Naive thymus-derived CD4-positive, alpha-beta T cell (primary cell): ENCODE measurements at regions of chr1 and their contacts with region 1.

Region 1: DNA sequence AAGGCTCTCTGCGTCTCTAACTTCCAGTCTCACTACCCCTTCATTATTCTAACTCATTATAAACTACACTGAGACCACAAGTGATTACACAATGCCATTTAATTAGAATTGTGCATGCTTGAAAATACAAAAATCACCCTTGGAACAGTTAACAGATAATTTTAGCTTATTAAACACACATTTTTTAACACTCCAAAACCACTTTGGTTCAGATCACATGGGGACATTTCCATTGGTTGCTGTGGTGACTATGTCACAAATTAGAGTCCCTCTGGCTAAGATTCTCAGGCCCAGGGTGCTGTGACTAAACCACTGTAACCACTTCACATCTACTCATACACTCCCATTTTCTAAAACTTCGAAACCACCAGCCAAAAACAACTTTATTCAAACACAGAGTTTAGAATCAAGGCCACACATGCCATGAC is 43.0 kb downstream of the JAK1 start:
- DNase-seq: no peak
- ATAC-seq: peak; percentile 70
- H3K4me3 ChIP-seq: no peak overlapping the region
- H3K4me3 Mint-ChIP-seq: peak overlapping the region; percentile 35 to 74 (median 62)
- H3K27ac ChIP-seq: peak overlapping the region; percentile 9
- H3K27ac Mint-ChIP-seq: peak overlapping the region; percentile 16 to 86 (median 69)
- H3K4me1 ChIP-seq: peaks cover 74 to 75% of the 10 kb centered on the region in 2 donors
- H3K4me1 Mint-ChIP-seq: peaks cover 79 to 100% (median 96%) of the 10 kb centered on the region in 7 donors
- H3K27me3 ChIP-seq: no peaks in the 10 kb centered on the region
- H3K27me3 Mint-ChIP-seq: no peaks in the 10 kb centered on the region

Region 2: DNA sequence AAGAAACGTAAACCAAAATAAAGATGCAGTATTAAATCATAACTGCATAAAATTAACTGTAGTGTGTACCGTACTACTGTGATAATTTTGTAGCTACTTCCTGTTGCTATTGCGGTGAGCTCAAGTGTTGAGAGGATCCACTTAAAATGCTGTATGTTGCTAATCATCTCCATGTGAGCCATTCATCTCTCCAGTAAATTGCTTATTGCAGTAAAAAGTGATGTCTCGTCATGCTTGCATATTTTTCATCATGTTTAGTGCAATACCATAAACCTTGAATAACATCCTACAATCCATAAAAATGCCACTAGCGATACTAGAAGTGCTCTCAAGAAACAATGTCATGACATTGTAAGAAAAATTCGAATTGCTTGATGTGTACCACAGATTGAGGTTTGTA is 112.2 kb before region 1 on chr1:
- CTCF ChIA-PET with region 1: no interaction called
- POLR2A ChIA-PET with region 1: no interaction called
- intact Hi-C with region 1: no loop called
- DNase-seq: no peak
- ATAC-seq: no peak
- H3K4me3 ChIP-seq: no peak overlapping the region
- H3K4me3 Mint-ChIP-seq: no peak overlapping the region
- H3K27ac ChIP-seq: no peak overlapping the region
- H3K27ac Mint-ChIP-seq: no peak overlapping the region
- H3K4me1 ChIP-seq: no peaks in the 10 kb centered on the region
- H3K4me1 Mint-ChIP-seq: no peaks in the 10 kb centered on the region
- H3K27me3 ChIP-seq: no peaks in the 10 kb centered on the region
- H3K27me3 Mint-ChIP-seq: peaks cover 0 to 2% (median 0%) of the 10 kb centered on the region in 5 donors

Region 3: DNA sequence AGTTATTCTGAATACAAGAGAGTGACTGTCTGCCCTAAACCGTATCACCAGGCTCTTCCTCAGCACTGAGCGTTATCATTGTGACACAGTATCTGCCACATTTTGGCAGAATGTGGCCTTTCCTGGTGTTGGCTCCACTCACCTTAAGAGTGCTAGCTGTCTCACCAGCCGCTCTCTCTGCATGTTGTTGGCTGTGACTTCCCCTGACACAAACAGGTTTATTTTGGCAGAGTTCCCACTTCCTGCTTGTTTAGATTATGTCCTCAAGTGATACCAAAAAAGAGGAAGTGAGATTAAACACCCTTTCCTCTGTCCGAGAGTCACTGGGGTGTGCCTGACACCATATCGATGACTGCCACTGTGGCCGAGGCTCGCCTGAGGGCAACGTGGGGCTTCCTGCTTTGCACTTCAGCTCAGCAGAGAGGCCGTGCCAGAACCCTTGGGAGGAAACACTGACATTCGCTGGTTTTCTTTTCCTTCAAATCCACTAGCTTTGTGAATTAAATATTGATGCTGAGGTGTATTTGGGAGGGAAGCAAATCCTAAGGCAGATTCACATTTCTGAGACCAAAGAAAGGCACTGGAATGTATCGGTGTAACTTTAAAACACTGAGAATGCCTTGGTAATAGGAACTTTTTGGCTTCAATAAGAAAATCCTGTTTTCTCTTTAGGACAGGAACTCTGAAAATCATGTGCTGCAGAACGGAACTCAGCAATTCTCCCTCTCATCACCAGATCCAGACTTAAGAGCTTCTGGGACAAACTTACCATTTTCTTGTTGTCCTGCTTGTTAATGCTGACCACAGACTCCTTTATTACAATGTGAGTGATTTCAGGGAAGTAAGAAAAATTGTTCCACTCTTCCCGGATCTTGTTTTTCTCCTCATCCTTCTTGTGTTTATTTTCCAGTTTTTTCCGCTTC is 59.0 kb before region 1 on chr1:
- CTCF ChIA-PET with region 1: no interaction called
- POLR2A ChIA-PET with region 1: no interaction called
- intact Hi-C with region 1: loop called in 1 of 2 experiments (anchors 5 kb)
- DNase-seq: peak in 8 of 9 donors; percentile 19 to 67 (median 50)
- ATAC-seq: peak; percentile 95
- H3K4me3 ChIP-seq: no peak overlapping the region
- H3K4me3 Mint-ChIP-seq: peak overlapping the region in 7 of 10 donors; percentile 3 to 65 (median 54)
- H3K27ac ChIP-seq: peak overlapping the region; percentile 29
- H3K27ac Mint-ChIP-seq: peak overlapping the region; percentile 26 to 93 (median 78)
- H3K4me1 ChIP-seq: peaks cover 15 to 29% of the 10 kb centered on the region in 2 donors
- H3K4me1 Mint-ChIP-seq: peaks cover 29 to 58% (median 39%) of the 10 kb centered on the region in 7 donors
- H3K27me3 ChIP-seq: no peaks in the 10 kb centered on the region
- H3K27me3 Mint-ChIP-seq: no peaks in the 10 kb centered on the region

Region 4: GRCh38 chr1:64877151-64877550 is 46.2 kb before region 1 on chr1:
- CTCF ChIA-PET with region 1: interaction called, 3 read pairs
- POLR2A ChIA-PET with region 1: interaction called, 4 read pairs
- intact Hi-C with region 1: loop called in 1 of 2 experiments (anchors 2 kb)
- DNase-seq: peak in 7 of 9 donors; percentile 75 to 90 (median 87)
- ATAC-seq: peak; percentile 96
- H3K4me3 ChIP-seq: peak overlapping the region; percentile 8
- H3K4me3 Mint-ChIP-seq: peak overlapping the region; percentile 70 to 83 (median 76)
- H3K27ac ChIP-seq: peak overlapping the region; percentile 36
- H3K27ac Mint-ChIP-seq: peak overlapping the region; percentile 41 to 95 (median 90)
- H3K4me1 ChIP-seq: peaks cover 43 to 53% of the 10 kb centered on the region in 2 donors
- H3K4me1 Mint-ChIP-seq: peaks cover 38 to 88% (median 84%) of the 10 kb centered on the region in 7 donors
- H3K27me3 ChIP-seq: no peaks in the 10 kb centered on the region
- H3K27me3 Mint-ChIP-seq: no peaks in the 10 kb centered on the region

Region 5: GRCh38 chr1:64933296-64934070 is 10.2 kb after region 1 on chr1:
- CTCF ChIA-PET with region 1: no interaction called
- POLR2A ChIA-PET with region 1: no interaction called
- intact Hi-C with region 1: loop called (anchors 1 to 2 kb)
- DNase-seq: peak in 6 of 9 donors; percentile 16 to 40 (median 28)
- ATAC-seq: peak; percentile 76
- H3K4me3 ChIP-seq: no peak overlapping the region
- H3K4me3 Mint-ChIP-seq: peak overlapping the region in 9 of 10 donors; percentile 43 to 80 (median 60)
- H3K27ac ChIP-seq: no peak overlapping the region
- H3K27ac Mint-ChIP-seq: peak overlapping the region in 8 of 9 donors; percentile 4 to 74 (median 49)
- H3K4me1 ChIP-seq: peaks cover 32 to 42% of the 10 kb centered on the region in 2 donors
- H3K4me1 Mint-ChIP-seq: peaks cover 44 to 94% (median 85%) of the 10 kb centered on the region in 7 donors
- H3K27me3 ChIP-seq: no peaks in the 10 kb centered on the region
- H3K27me3 Mint-ChIP-seq: no peaks in the 10 kb centered on the region

Region 6: DNA sequence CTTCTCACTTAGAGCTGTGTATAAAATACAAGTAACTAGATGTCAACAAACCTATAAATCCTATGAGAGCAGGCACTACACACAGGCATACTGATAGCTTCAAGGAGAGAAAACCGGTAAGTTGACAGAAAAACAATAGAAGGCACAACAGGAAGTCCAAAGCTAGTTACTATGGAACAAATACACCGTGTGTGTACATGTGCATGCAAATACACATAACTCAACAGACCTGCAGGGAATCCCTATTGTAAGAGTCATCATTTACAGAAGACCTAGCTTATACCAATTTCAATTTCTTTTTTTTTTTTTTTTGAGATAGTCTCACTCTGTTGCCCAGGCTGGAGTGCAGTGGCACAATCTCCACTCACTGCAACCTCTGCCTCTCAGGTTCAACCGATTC is 16.7 kb after region 1 on chr1:
- CTCF ChIA-PET with region 1: no interaction called
- POLR2A ChIA-PET with region 1: no interaction called
- intact Hi-C with region 1: loop called (anchors 2 kb)
- DNase-seq: no peak
- ATAC-seq: peak; percentile 62
- H3K4me3 ChIP-seq: no peak overlapping the region
- H3K4me3 Mint-ChIP-seq: peak overlapping the region in 8 of 10 donors; percentile 39 to 62 (median 50)
- H3K27ac ChIP-seq: no peak overlapping the region
- H3K27ac Mint-ChIP-seq: peak overlapping the region in 4 of 9 donors; percentile 29 to 72 (median 47)
- H3K4me1 ChIP-seq: peaks cover 32 to 43% of the 10 kb centered on the region in 2 donors
- H3K4me1 Mint-ChIP-seq: peaks cover 34 to 92% (median 85%) of the 10 kb centered on the region in 7 donors
- H3K27me3 ChIP-seq: no peaks in the 10 kb centered on the region
- H3K27me3 Mint-ChIP-seq: no peaks in the 10 kb centered on the region